ENCODE measurements at regions of chr14 and their contacts with region 1.

Region 1: DNA sequence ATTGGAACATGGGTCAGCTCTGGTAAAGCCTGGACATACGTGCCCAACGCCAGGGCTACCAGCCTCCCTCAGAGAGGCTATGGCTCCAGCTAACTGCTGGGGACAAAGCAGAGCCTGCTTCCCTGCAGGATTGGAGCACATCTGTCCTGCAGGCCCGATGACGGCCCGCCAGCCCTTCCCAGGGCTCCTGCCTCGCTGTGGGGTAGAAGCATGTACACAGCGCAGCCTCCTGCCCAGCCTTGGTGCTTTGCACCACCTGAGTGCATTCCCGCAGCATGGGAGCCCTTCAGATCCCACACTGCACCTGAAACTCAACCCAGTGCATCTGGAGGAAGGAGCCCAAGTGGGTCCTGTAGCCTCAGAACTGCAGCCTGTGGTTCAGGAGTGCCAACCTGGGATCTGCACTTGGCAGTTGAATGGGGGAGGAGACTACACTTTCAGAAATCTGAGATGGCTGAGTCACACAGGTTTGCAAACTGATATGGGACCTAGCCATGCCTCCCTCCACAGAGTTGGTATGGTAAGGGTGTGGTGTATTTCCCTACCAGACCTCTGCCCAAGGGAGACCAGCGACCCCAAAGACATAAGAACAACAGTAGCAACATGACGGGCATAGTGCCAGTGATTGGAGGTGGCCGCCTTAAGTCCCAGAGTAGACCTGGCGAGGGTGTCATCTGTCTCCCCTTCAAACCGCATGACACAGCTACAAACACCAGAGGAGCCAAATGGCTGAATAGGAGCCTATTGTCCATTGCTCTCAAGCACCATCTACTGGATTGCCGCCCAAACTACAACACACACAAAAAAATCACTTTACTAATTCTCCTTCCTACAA is 273.9 kb upstream of the MIS18BP1 start:
- DNase-seq: peak; percentile 37
- H3K4me3 ChIP-seq: no peak overlapping the region
- H3K27ac ChIP-seq: no peak overlapping the region
- H3K4me1 ChIP-seq: no peaks in the 10 kb centered on the region
- CTCF ChIP-seq: peak; percentile 74

Region 2: DNA sequence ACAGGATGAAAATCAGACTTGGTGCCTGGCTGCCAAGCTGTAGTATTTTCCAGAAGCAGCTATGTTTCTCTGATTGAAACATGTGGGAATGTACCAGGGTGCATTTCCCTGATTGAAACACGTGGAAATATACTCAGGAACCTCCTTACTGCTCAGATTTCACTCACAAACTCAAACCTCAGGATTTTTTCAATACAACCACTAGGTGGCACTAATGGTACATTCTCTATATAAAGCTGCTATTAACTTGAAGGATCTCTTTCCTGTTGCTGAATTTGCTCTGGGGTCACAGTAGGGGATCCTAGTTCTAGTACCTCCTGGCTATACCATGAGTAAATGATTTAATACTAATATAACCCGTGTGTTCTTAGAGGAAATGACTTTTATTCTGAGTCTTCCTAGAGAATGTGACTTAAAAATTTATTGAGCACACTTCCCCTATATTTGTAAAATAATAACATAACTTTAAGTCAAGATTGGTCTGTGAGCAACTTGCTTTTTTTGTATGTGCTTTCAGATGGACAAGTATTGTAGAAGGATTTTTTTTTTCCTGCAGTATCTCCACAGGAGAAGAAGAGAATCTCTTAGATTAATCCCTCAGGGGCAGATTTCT is 100.2 kb before region 1 on chr14:
- CTCF ChIA-PET with region 1: no interaction called
- POLR2A ChIA-PET with region 1: interaction called, 3 read pairs
- intact Hi-C with region 1: loop called (anchors 5 kb)
- DNase-seq: peak; percentile 54
- H3K4me3 ChIP-seq: no peak overlapping the region
- H3K27ac ChIP-seq: no peak overlapping the region
- H3K4me1 ChIP-seq: no peaks in the 10 kb centered on the region
- CTCF ChIP-seq: peak; percentile 88

Region 3: DNA sequence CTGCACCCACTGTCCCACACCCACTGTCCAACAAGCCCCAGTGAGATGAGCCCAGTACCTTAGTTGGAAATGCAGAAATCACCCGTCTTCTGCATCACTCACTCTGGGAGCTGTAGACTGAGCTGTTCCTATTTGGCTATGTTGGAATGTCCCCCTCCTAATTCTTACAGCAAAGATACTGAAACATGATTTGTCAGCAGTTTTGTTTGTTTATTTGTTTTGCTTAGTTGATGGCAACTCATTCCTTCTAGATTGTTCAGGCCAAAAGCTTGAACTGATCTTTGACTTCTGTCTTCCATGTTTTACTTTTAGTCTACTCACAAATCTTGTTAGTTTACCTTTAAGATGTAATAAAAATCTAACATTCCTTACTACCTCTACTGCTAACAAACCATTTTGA is 40.3 kb before region 1 on chr14:
- CTCF ChIA-PET with region 1: no interaction called
- POLR2A ChIA-PET with region 1: no interaction called
- intact Hi-C with region 1: no loop called
- DNase-seq: no peak
- H3K4me3 ChIP-seq: no peak overlapping the region
- H3K27ac ChIP-seq: no peak overlapping the region
- H3K4me1 ChIP-seq: no peaks in the 10 kb centered on the region
- CTCF ChIP-seq: no peak

Measured in OCI-LY7 (cell line).